ENCODE measurements at regions of chr17 and their contacts with region 1.

Region 1: DNA sequence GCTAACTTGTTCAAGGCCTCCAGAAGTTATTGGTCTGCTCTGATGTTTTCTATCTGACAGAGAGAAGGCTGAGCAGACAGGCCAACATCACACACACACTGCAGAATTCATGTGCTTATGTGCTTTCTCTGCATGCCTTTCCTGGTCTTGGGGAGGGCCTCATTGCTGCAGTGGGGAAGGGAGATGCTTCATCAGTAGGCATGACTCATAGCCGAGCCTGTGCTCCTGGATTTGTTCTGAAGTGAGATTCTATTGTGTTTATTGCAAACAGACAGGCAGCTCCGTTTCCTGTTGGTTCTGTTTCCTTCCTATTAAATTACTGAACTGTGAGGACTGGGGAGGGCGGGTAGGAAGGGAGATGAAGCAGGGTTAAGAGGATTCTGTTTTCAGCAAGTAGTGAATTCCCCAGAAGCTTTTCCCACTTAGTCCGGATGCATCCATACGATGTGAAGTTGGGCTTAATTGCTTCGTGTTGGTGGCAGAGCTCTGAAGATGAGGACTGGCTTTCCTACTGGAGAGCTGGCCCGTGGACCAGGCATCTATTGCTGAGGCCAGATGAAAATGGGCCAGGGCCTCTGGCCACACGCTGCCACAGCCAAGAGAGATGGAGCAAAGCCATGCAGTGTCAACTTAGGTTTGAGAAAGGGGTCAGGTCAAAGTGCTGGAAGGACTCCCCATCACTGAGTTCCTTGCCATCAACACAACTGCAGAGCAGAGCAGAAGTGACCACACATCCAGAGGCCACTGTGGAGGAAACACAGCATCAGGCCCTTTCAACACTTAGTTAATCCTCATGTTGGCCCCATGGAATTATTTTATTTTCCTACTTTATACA is 179.3 kb downstream of the UTP18 start:
- DNase-seq: no peak

Region 2: DNA sequence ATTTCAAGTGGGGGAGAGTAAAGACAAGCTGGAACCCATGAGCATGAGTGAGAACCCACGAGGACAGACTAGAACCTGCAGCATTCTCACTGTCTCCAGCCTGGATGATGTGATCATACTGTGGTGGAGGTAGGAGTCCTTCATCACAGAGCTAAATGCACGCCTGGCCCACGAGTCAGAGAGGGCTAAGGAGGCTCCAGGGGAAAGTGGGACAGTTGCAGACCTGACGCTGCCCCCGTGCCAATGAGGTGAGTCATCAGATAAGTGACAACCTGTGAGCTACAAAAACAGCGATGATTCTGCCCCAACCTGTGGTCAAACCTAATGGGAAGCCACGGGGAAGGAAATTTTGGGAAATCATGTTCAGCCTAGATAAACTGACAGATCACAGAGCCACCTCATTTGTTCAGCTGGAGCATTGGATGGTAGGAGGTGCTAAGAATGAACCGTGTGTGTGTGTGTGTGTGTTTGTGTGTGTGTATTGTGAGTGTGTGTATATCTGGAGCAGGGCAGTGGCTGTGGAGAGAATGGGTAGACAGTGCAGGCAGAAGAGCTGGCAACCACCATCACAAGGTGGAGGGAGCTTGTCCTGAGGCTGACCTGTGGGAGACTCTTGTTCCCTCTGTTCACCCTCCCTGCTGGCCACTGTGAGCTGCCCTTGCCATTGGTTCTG is 47.5 kb before region 1 on chr17:
- intact Hi-C with region 1: no loop called
- DNase-seq: no peak

Region 3: DNA sequence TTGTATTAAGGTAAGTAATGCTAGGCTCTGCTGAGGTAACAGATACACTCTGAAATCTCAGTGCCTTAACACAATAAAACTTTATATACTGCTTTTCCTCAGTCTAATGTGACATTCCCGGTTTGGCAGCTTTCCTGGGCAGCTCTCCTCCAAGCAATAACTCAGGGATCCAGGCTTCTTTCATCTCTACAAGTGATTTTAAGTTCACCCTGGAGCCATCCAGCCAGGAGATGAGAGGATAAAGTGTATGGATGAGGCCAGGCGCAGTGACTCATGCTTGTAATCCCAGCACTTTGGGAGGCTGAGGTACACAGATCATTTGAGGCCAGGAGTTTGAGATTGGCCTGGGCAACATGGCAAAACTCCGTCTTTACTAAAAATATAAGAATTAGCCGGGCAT is 32.1 kb before region 1 on chr17:
- intact Hi-C with region 1: no loop called
- DNase-seq: no peak

Region 4: DNA sequence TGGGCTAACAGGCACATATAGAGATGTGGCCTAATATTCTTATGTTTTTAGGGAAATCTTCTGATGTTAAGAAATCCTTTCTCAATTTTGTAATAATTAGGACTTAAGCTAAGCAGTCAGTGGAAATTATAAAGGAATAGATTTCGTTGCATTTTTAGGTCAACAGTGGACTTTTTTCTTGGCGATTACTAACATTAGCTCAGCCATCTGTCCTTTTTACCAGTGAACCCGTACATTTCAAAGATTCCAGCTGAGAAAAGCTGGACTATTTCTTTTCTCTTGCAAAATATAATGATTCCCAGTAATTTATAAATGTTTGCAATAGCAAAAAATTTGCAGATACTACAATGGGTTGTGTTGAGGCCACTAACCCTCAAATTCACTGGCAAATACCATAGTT is 773.8 kb after region 1 on chr17:
- intact Hi-C with region 1: loop called in 1 of 2 experiments (anchors 5 kb)
- DNase-seq: no peak